ENCODE measurements at regions of chr6 and their contacts with region 1.

Region 1: DNA sequence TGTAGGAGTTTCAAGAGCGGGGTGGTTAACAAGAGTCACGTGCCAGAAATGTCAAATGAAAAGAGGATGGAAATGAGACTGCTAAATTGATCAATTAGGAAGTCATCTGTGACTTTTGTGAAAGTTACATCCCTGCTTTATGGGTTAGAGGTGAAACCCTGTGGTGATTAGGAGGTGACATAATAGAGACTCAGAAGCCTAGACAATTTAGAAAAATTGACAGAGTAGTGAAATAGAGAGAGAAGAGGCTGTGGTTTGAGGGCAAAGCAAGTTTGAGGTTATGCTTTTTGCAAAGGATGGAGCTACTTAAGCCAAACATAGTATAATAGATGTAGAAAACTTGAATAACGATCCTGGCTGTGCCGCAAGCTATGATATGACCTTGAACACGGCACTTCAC is 71.8 kb downstream of the IMPG1 start:
- DNase-seq: no peak
- ATAC-seq: no peak
- H3K4me3 Mint-ChIP-seq: no peak overlapping the region
- H3K27ac Mint-ChIP-seq: no peak overlapping the region
- H3K4me1 Mint-ChIP-seq: no peaks in the 10 kb centered on the region
- H3K27me3 Mint-ChIP-seq: no peaks in the 10 kb centered on the region

Region 2: GRCh38 chr6:75863001-75863400 is 137.6 kb before region 1 on chr6:
- CTCF ChIA-PET with region 1: no interaction called
- POLR2A ChIA-PET with region 1: no interaction called
- intact Hi-C with region 1: no loop called
- DNase-seq: no peak
- ATAC-seq: no peak
- H3K4me3 Mint-ChIP-seq: no peak overlapping the region
- H3K27ac Mint-ChIP-seq: no peak overlapping the region
- H3K4me1 Mint-ChIP-seq: no peaks in the 10 kb centered on the region
- H3K27me3 Mint-ChIP-seq: peaks cover 12% of the 10 kb centered on the region

Region 3: GRCh38 chr6:76043690-76044089 is 43.1 kb after region 1 on chr6:
- CTCF ChIA-PET with region 1: no interaction called
- POLR2A ChIA-PET with region 1: no interaction called
- intact Hi-C with region 1: loop called in 1 of 2 experiments (anchors 1 kb)
- DNase-seq: no peak
- ATAC-seq: no peak
- H3K4me3 Mint-ChIP-seq: no peak overlapping the region
- H3K27ac Mint-ChIP-seq: no peak overlapping the region
- H3K4me1 Mint-ChIP-seq: no peaks in the 10 kb centered on the region
- H3K27me3 Mint-ChIP-seq: no peaks in the 10 kb centered on the region